ENCODE measurements at regions of chr10 and their contacts with region 1.

Region 1: GRCh38 chr10:110081911-110082310 is 74.1 kb downstream of the ADD3 start:
- DNase-seq: no peak
- ATAC-seq: no peak
- H3K4me3 Mint-ChIP-seq: peak overlapping the region; percentile 12
- H3K27ac Mint-ChIP-seq: peak overlapping the region; percentile 87
- H3K4me1 Mint-ChIP-seq: peaks cover 85% of the 10 kb centered on the region
- H3K27me3 Mint-ChIP-seq: no peaks in the 10 kb centered on the region
- CTCF ChIP-seq: no peak

Region 2: GRCh38 chr10:110007701-110008517 is 74.0 kb before region 1 on chr10 and contains the start of gene ADD3:
- CTCF ChIA-PET with region 1: no interaction called
- POLR2A ChIA-PET with region 1: interaction called, 6 read pairs
- intact Hi-C with region 1: loop called (anchors 5 kb)
- DNase-seq: peak; percentile 97
- ATAC-seq: peak; percentile 83
- H3K4me3 Mint-ChIP-seq: no peak within 1 kb of the TSS
- H3K27ac Mint-ChIP-seq: peak within 1 kb of the TSS; percentile 84
- H3K4me1 Mint-ChIP-seq: peaks cover 40% of the 10 kb centered on the region
- H3K27me3 Mint-ChIP-seq: no peaks in the 10 kb centered on the region
- CTCF ChIP-seq: no peak
- total RNA-seq, gene ADD3: 66.8 to 77.0 TPM

Region 3: DNA sequence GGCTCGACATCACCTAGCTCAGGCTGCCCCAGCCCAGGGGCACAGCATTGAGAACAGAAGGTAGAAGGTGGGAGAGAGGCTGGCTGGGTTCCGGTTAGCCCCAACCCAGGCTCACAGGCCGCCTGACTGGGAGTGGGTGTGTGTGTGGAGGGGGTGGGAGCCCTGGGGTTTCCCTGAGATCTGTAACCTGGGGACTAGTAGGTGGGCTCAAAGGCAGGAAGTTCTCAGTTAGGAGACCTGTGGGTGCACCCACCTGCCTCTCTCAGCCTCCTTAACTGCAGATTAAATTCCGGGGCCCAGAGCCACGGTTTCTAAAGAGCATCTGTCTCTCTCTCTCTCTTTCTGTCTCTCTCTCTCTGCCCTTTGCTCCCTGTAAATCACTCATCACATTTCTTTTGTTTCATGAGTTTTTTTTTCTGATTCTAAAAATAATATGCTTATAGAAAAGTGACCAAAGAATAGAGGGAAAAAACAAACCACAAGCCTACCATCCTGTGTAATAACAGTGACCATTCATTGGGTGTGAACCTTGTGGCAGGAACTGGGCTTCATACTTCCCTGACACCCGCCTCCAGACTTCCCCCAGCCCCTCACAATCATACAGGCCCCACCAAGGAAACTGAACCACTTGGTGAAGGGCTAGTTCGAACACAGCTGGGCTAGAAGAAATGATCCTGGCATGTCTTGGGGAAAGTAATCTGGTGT is 306.2 kb after region 1 on chr10:
- CTCF ChIA-PET with region 1: no interaction called
- POLR2A ChIA-PET with region 1: no interaction called
- intact Hi-C with region 1: no loop called
- DNase-seq: peak; percentile 70
- ATAC-seq: peak; percentile 83
- H3K4me3 Mint-ChIP-seq: peak overlapping the region; percentile 10
- H3K27ac Mint-ChIP-seq: peak overlapping the region; percentile 89
- H3K4me1 Mint-ChIP-seq: peaks cover 27% of the 10 kb centered on the region
- H3K27me3 Mint-ChIP-seq: no peaks in the 10 kb centered on the region
- CTCF ChIP-seq: no peak